ENCODE measurements at regions of chr15 and their contacts with region 1.

Region 1: GRCh38 chr15:99014803-99015676 is 7.4 kb upstream of the PGPEP1L start:
- DNase-seq: peak; percentile 79
- ATAC-seq: peak; percentile 85
- H3K4me3 ChIP-seq: peak overlapping the region; percentile 79
- H3K27ac ChIP-seq: peak overlapping the region; percentile 90
- H3K4me1 ChIP-seq: peaks cover 26% of the 10 kb centered on the region
- H3K27me3 ChIP-seq: no peaks in the 10 kb centered on the region
- CTCF ChIP-seq: no peak

Region 2: GRCh38 chr15:97612062-97612461 is 1403.0 kb before region 1 on chr15:
- CTCF ChIA-PET with region 1: no interaction called
- POLR2A ChIA-PET with region 1: no interaction called
- intact Hi-C with region 1: no loop called
- DNase-seq: no peak
- ATAC-seq: no peak
- H3K4me3 ChIP-seq: no peak overlapping the region
- H3K27ac ChIP-seq: no peak overlapping the region
- H3K4me1 ChIP-seq: no peaks in the 10 kb centered on the region
- H3K27me3 ChIP-seq: no peaks in the 10 kb centered on the region
- CTCF ChIP-seq: no peak

Region 3: DNA sequence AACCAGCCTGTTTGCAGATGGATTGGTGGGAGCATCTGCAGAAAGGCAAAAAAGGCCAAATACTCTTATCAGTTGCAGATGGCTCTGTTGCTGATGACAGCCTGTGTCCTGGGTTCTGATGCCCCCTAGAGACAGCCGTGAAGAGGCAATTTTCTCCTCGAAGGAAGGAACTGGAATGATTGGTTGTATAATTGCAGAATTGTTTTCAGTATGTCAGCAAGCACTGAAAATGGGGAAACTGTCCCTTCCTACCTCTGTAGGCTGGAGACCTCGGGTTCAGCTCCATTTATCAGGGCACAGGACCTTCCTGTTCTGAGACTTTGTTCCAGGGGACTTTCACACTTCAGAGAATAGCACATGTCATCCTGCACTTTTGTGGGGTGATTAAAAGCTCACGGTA is 110.5 kb before region 1 on chr15:
- CTCF ChIA-PET with region 1: interaction called, 10 read pairs
- POLR2A ChIA-PET with region 1: no interaction called
- intact Hi-C with region 1: no loop called
- DNase-seq: peak; percentile 60
- ATAC-seq: peak; percentile 50
- H3K4me3 ChIP-seq: no peak overlapping the region
- H3K27ac ChIP-seq: peak overlapping the region; percentile 81; the same call in 1 of the 2 replicates
- H3K4me1 ChIP-seq: peaks cover 53% of the 10 kb centered on the region
- H3K27me3 ChIP-seq: no peaks in the 10 kb centered on the region
- CTCF ChIP-seq: peak; percentile 84

Region 4: DNA sequence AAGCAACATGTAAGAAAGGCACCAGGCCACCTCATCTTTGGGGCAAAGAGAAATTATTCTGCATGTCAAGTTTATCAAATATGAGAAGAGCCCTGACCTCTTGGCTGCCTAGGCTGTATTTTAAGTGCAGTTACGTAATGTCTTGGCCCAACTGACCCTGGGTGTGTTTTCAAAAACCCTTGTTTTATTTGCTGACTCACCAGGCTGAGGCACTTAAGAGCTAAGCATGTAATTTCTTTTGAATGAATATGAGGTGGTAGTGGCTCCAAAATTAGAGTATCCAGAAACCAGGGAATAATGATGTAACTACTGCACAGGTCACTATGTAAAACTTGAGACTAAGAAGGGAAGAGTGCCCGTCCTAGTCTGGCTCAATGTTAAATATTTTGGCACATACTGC is 31.7 kb before region 1 on chr15:
- CTCF ChIA-PET with region 1: no interaction called
- POLR2A ChIA-PET with region 1: interaction called, 8 read pairs
- intact Hi-C with region 1: loop called (anchors 1 kb)
- DNase-seq: peak; percentile 77
- ATAC-seq: peak; percentile 57
- H3K4me3 ChIP-seq: no peak overlapping the region
- H3K27ac ChIP-seq: peak overlapping the region; percentile 55
- H3K4me1 ChIP-seq: peaks cover 36% of the 10 kb centered on the region
- H3K27me3 ChIP-seq: no peaks in the 10 kb centered on the region
- CTCF ChIP-seq: no peak